ENCODE measurements at regions of chr16 and their contacts with region 1.

Region 1: DNA sequence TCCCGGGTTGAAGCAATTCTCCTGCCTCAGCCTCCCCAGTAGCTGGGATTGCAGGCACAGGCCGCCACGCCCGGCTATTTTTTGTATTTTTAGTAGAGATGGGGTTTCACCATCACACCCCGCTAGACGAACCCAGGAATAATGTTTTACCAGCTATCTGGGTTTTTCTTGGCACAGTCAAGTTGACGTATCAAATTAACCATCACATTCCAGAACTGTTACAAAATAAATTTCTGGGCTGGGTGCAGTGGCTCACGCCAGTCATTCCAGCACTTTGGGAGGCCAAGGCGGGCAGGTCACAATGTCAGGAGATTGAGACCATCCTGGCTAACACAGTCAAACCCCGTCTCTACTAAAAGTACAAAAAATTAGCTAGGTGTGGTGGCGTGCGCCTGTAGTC is 501.2 kb downstream of the SHISA9 start:
- DNase-seq: no peak
- H3K4me3 ChIP-seq: no peak overlapping the region
- CTCF ChIP-seq: no peak
- POLR2A ChIP-seq: no peak

Region 2: DNA sequence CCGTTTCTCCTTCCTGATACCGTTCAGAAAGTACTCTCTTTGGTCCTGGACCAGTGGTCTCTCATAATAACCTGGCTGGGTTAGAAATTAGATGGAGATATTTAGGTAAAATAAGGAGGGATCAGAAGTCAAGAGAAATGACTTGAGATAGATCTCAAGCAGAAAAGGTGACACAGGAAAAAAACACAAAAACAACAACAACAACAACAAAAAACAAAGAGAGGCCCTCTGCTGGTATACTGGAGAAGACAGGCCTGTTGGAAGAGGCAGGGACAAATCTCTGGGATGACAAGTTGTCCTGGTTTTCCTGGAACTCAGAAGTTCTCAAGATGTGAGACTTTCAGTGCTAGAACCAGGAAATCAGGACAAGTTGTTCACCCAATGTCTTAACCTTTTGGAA is 70.7 kb before region 1 on chr16:
- intact Hi-C with region 1: no loop called
- DNase-seq: no peak
- H3K4me3 ChIP-seq: no peak overlapping the region
- CTCF ChIP-seq: no peak
- POLR2A ChIP-seq: no peak

Region 3: DNA sequence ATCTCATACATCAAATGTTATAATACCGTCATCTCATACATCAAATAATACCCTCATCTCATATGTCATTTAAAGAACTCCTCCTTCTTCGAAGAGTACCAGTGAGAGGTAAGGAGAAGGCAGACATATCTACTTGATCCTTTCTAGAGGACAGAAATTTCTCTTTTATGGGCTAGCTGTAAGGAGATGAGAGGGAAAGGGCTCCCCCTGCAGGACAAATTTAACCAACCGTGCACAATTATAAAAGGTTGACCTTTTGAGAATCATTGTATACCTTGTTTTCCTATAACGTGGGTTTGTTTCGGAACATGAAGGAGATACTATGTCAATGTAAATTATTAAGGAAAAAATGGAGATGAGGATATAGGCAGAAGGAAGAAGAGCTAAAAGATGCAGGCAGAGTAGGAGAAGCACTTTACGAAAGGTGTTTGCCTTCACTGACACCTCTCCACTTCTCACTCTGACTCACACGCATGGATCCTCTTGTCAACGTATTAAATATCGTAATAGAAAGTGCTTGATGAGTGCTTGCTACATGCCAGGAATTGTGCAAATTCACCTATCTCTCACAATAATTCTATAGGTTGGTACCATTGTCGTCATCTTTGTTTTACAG is 51.4 kb after region 1 on chr16:
- intact Hi-C with region 1: loop called (anchors 10 kb)
- DNase-seq: peak in 1 of 2 donors; percentile 25
- H3K4me3 ChIP-seq: no peak overlapping the region
- CTCF ChIP-seq: no peak
- POLR2A ChIP-seq: no peak

Measured in lower leg skin (tissue), 4 donors.